PC-3 (cell line): ENCODE measurements at regions of chr3 and their contacts with region 1.

Region 1: GRCh38 chr3:151146071-151146730 is 56.8 kb downstream of the GPR171 start:
- DNase-seq: peak; percentile 89
- ATAC-seq: peak; percentile 86
- H3K4me3 ChIP-seq: peak overlapping the region; percentile 53
- H3K27ac ChIP-seq: peak overlapping the region; percentile 50
- H3K4me1 ChIP-seq: peaks cover 17% of the 10 kb centered on the region
- H3K27me3 ChIP-seq: peaks cover 26% of the 10 kb centered on the region
- CTCF ChIP-seq: peak; percentile 97

Region 2: DNA sequence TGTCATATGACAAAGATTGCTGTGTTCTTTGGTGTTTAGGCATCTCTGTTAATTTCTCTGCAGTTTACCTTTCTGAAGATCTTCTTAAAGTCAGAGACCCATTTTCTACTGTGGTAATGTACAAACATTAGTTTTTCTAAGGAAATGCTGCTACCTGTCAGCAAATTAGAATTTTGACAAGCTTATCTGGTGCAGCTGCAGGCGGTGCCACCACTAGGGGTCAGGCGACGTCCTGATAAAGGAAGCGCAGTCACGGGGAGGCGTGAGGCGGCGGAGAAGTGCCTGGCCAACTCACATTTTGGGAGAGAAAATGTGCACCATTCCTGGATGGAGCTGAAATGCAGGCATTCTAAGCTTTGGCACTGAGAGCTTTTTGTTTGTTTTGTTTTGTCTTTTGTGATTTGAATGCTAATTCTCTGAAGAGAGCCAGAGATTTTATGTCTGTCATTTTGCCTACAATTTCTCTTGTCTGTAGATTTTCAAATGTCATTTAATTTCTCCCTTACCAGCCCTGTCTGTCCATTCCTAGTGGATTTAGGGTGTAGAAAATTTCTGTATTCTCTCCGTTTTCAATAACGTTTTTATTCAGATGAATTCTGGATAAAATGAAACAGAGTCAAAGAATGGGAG is 358.3 kb before region 1 on chr3:
- CTCF ChIA-PET with region 1: no interaction called
- POLR2A ChIA-PET with region 1: no interaction called
- intact Hi-C with region 1: loop called (anchors 1 kb)
- DNase-seq: peak; percentile 86
- ATAC-seq: peak; percentile 71
- H3K4me3 ChIP-seq: no peak overlapping the region
- H3K27ac ChIP-seq: no peak overlapping the region
- H3K4me1 ChIP-seq: peaks cover 45% of the 10 kb centered on the region
- H3K27me3 ChIP-seq: no peaks in the 10 kb centered on the region
- CTCF ChIP-seq: peak; percentile 98

Region 3: DNA sequence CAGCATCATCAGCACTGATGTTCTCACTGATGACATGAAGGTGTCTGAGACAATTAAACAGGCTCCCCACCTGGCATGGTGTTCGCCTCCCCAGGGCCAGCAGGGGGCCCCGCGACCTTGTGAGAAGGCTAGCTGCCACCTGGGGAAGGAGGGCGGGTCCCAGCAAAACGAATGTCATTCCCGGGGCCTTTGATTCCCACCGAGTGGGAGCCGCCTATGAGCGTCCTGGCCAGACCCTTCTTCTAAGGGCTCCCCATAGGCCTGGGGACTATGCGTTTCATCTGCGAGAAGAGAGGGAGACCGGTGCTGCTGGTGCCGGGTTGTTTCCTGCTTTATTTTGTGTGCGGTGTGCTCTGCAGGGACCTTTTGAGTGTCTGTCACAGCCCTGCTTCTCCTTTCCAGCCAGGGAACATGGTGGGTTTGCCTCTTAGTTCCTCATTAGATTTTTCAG is 220.4 kb before region 1 on chr3:
- CTCF ChIA-PET with region 1: no interaction called
- POLR2A ChIA-PET with region 1: no interaction called
- intact Hi-C with region 1: loop called (anchors 1 kb)
- DNase-seq: peak; percentile 61
- ATAC-seq: peak; percentile 96
- H3K4me3 ChIP-seq: peak overlapping the region; percentile 30; the same call in 1 of the 2 replicates
- H3K27ac ChIP-seq: no peak overlapping the region
- H3K4me1 ChIP-seq: no peaks in the 10 kb centered on the region; the same call in 1 of the 2 replicates
- H3K27me3 ChIP-seq: peaks cover 36% of the 10 kb centered on the region
- CTCF ChIP-seq: peak; percentile 93

Region 4: GRCh38 chr3:151067158-151067557 is 79.0 kb before region 1 on chr3:
- CTCF ChIA-PET with region 1: no interaction called
- POLR2A ChIA-PET with region 1: no interaction called
- intact Hi-C with region 1: loop called (anchors 1 kb)
- DNase-seq: peak; percentile 38
- ATAC-seq: no peak; the same call in 1 of the 2 replicates
- H3K4me3 ChIP-seq: no peak overlapping the region
- H3K27ac ChIP-seq: no peak overlapping the region
- H3K4me1 ChIP-seq: no peaks in the 10 kb centered on the region
- H3K27me3 ChIP-seq: peaks cover 9% of the 10 kb centered on the region; the same call in 1 of the 2 replicates
- CTCF ChIP-seq: peak; percentile 58